ENCODE measurements at regions of chr18 and their contacts with region 1.

Region 1: GRCh38 chr18:26383454-26384270 is 157.4 kb downstream of the TAF4B start:
- DNase-seq: no peak
- H3K4me3 ChIP-seq: no peak overlapping the region
- H3K27ac ChIP-seq: no peak overlapping the region
- H3K4me1 ChIP-seq: peaks cover 6 to 19% (median 15%) of the 10 kb centered on the region in 4 donors
- H3K27me3 ChIP-seq: no peaks in the 10 kb centered on the region
- CTCF ChIP-seq: peak; percentile 63 to 81 (median 81)
- EP300 ChIP-seq: no peak
- POLR2A ChIP-seq: no peak

Region 2: GRCh38 chr18:26480897-26481895 is 97.5 kb after region 1 on chr18:
- intact Hi-C with region 1: no loop called
- DNase-seq: no peak
- H3K4me3 ChIP-seq: no peak overlapping the region
- H3K27ac ChIP-seq: no peak overlapping the region
- H3K4me1 ChIP-seq: no peaks in the 10 kb centered on the region
- H3K27me3 ChIP-seq: no peaks in the 10 kb centered on the region
- CTCF ChIP-seq: no peak
- EP300 ChIP-seq: no peak
- POLR2A ChIP-seq: no peak

Region 3: GRCh38 chr18:26648509-26649192 is 265.0 kb after region 1 on chr18:
- intact Hi-C with region 1: loop called (anchors 2 kb)
- DNase-seq: no peak
- H3K4me3 ChIP-seq: no peak overlapping the region
- H3K27ac ChIP-seq: no peak overlapping the region
- H3K4me1 ChIP-seq: peaks cover 0 to 11% (median 3%) of the 10 kb centered on the region in 4 donors
- H3K27me3 ChIP-seq: no peaks in the 10 kb centered on the region
- CTCF ChIP-seq: no peak
- EP300 ChIP-seq: no peak
- POLR2A ChIP-seq: no peak

Region 4: DNA sequence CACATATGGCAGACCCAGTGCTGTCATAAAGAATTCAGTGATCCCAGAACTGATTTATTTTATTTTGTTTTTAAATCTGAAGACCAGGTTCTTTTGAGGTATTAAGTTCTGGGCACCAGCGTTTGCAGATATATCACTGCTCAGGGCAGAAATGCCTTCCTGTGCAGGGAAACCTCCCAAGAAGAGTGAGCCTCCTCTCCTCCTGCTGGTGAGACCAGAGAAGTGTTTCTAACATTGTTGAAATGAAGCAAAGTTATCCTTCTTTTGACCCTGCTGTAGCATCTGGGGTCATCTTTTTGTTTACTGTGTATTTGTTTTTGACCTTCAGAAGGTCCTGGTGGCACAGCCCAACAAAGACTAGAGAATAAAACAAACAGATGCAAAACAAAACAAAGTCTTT is 387.9 kb after region 1 on chr18:
- intact Hi-C with region 1: no loop called
- DNase-seq: no peak
- H3K4me3 ChIP-seq: no peak overlapping the region
- H3K27ac ChIP-seq: no peak overlapping the region
- H3K4me1 ChIP-seq: no peaks in the 10 kb centered on the region
- H3K27me3 ChIP-seq: peaks cover 0 to 12% (median 0%) of the 10 kb centered on the region in 4 donors
- CTCF ChIP-seq: peak in 1 of 3 experiments; percentile 22
- EP300 ChIP-seq: no peak
- POLR2A ChIP-seq: no peak

Measured in esophagus muscularis mucosa (tissue), 4 donors.